ENCODE measurements at regions of chr6 and their contacts with region 1.

Region 1: GRCh38 chr6:83221889-83222479 is 28.8 kb downstream of the RWDD2A start:
- DNase-seq: no peak
- ATAC-seq: no peak
- H3K4me3 Mint-ChIP-seq: no peak overlapping the region
- H3K27ac Mint-ChIP-seq: no peak overlapping the region
- H3K4me1 Mint-ChIP-seq: no peaks in the 10 kb centered on the region
- H3K27me3 Mint-ChIP-seq: peaks cover 2% of the 10 kb centered on the region

Region 2: GRCh38 chr6:83097204-83097603 is 124.8 kb before region 1 on chr6:
- CTCF ChIA-PET with region 1: no interaction called
- POLR2A ChIA-PET with region 1: no interaction called
- DNase-seq: no peak
- ATAC-seq: no peak
- H3K4me3 Mint-ChIP-seq: no peak overlapping the region
- H3K27ac Mint-ChIP-seq: no peak overlapping the region
- H3K4me1 Mint-ChIP-seq: no peaks in the 10 kb centered on the region
- H3K27me3 Mint-ChIP-seq: no peaks in the 10 kb centered on the region

Region 3: GRCh38 chr6:83169511-83169910 is 52.5 kb before region 1 on chr6:
- CTCF ChIA-PET with region 1: no interaction called
- POLR2A ChIA-PET with region 1: no interaction called
- DNase-seq: no peak
- ATAC-seq: no peak
- H3K4me3 Mint-ChIP-seq: no peak overlapping the region
- H3K27ac Mint-ChIP-seq: no peak overlapping the region
- H3K4me1 Mint-ChIP-seq: no peaks in the 10 kb centered on the region
- H3K27me3 Mint-ChIP-seq: no peaks in the 10 kb centered on the region

Region 4: GRCh38 chr6:83252717-83253116 is 30.7 kb after region 1 on chr6:
- CTCF ChIA-PET with region 1: no interaction called
- POLR2A ChIA-PET with region 1: no interaction called
- DNase-seq: no peak
- ATAC-seq: no peak
- H3K4me3 Mint-ChIP-seq: no peak overlapping the region
- H3K27ac Mint-ChIP-seq: no peak overlapping the region
- H3K4me1 Mint-ChIP-seq: no peaks in the 10 kb centered on the region
- H3K27me3 Mint-ChIP-seq: peaks cover 8% of the 10 kb centered on the region

Region 5: DNA sequence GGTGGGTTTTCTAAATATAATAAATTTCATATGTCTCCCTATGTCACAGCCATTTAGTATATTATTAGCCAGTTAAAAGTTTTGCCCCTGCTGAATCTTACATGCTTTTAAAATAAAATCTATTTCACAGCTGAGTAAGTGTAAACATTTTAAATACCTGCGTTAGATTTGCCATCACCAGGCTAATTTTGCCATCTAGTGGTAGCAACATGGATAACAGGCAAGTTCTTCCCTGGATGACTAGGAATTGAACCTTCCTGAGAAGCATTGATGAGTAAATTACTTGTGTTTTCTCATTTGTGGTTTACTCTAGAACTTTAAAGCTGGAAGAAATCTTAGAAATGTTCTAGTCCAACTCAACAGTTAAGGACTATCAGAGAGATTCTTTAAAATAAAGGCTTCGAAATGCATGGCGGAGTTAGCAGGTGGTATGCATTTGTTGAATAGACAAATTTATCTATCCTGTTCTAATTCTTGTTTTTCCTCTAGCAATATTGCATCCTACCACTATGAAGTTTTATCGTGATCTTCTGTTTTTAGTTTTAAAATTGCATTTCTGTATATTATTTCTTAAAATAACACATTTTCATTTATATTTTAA is 293.0 kb after region 1 on chr6:
- CTCF ChIA-PET with region 1: interaction called, 60 read pairs
- POLR2A ChIA-PET with region 1: no interaction called
- DNase-seq: peak; percentile 46
- ATAC-seq: no peak
- H3K4me3 Mint-ChIP-seq: no peak overlapping the region
- H3K27ac Mint-ChIP-seq: no peak overlapping the region
- H3K4me1 Mint-ChIP-seq: peaks cover 6% of the 10 kb centered on the region
- H3K27me3 Mint-ChIP-seq: peaks cover 27% of the 10 kb centered on the region

Region 6: GRCh38 chr6:83536034-83536646 is 314.2 kb after region 1 on chr6:
- CTCF ChIA-PET with region 1: interaction called, 14 read pairs
- POLR2A ChIA-PET with region 1: no interaction called
- DNase-seq: peak; percentile 63
- ATAC-seq: no peak
- H3K4me3 Mint-ChIP-seq: no peak overlapping the region
- H3K27ac Mint-ChIP-seq: no peak overlapping the region
- H3K4me1 Mint-ChIP-seq: no peaks in the 10 kb centered on the region
- H3K27me3 Mint-ChIP-seq: no peaks in the 10 kb centered on the region

Measured in activated CD8-positive, alpha-beta T cell treated with anti-CD3 and anti-CD28 coated beads, Interleukin-2, amount 10 ng/mL, durations not matched to agents 7 days and 5 days (primary cell).